Activated B cell treated with CpG ODN at 0.5 μM for 24 hours (primary cell): ENCODE measurements at regions of chr3 and their contacts with region 1.

Region 1: DNA sequence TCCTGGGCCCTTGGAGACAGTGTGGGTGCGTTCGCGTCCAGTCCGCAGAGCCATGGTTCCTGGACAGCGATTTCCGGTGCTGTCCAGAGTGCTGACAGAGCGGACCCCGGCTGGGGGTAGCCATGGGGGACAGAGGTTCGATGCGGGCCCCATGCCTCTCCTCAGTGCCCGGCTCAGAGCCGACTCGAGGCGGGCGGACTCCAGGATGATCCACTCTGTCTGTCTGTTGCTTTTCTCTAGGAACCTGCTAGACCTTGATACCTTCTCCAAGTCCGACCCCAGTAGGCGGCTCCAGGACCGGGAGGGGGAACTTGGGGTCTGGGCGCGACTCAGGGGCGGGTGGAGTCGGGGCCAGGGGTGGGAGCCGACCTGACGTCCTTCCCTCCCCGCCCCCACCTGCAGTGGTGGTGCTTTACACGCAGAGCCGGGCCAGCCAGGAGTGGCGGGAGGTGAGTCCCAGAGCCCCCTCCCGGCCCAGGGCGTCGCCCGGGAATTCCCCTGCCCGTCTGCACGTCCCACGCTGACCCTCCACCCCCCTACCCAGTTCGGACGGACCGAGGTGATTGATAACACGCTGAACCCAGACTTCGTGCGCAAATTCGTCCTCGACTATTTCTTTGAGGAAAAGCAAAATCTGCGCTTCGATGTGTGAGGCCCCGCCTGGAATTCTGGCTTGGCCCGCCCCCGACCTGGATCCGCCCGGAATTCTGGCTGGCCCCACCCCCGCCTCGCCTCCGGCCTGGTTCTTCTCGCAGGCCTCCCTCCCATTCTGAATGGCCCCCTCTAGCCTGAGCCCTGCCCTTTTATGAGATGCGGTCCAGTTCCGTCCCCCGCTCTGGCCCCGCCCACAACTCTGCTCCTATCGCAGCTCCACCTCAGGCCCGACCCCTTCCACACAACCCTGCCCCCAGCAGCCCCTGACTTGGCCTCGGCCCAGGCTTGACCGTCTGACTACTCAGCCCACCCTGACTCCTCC is 1.0 kb downstream of the CPNE9 start:
- DNase-seq: no peak
- ATAC-seq: peak; percentile 47
- H3K4me3 Mint-ChIP-seq: peak overlapping the region; percentile 55
- H3K27ac Mint-ChIP-seq: no peak overlapping the region
- H3K4me1 Mint-ChIP-seq: peaks cover 19% of the 10 kb centered on the region
- H3K27me3 Mint-ChIP-seq: peaks cover 15% of the 10 kb centered on the region
- CTCF ChIP-seq: no peak

Region 2: GRCh38 chr3:9552252-9552999 is 152.2 kb before region 1 on chr3:
- CTCF ChIA-PET with region 1: no interaction called
- POLR2A ChIA-PET with region 1: no interaction called
- intact Hi-C with region 1: no loop called
- DNase-seq: no peak
- ATAC-seq: no peak
- H3K4me3 Mint-ChIP-seq: no peak overlapping the region
- H3K27ac Mint-ChIP-seq: no peak overlapping the region
- H3K4me1 Mint-ChIP-seq: peaks cover 7% of the 10 kb centered on the region
- H3K27me3 Mint-ChIP-seq: peaks cover 45% of the 10 kb centered on the region
- CTCF ChIP-seq: no peak

Region 3: GRCh38 chr3:9690451-9691450 is 13.9 kb before region 1 on chr3:
- CTCF ChIA-PET with region 1: no interaction called
- POLR2A ChIA-PET with region 1: interaction called, 7 read pairs
- intact Hi-C with region 1: loop called (anchors 1 kb)
- DNase-seq: peak; percentile 60
- ATAC-seq: peak; percentile 99
- H3K4me3 Mint-ChIP-seq: no peak overlapping the region
- H3K27ac Mint-ChIP-seq: peak overlapping the region; percentile 12
- H3K4me1 Mint-ChIP-seq: peaks cover 24% of the 10 kb centered on the region
- H3K27me3 Mint-ChIP-seq: no peaks in the 10 kb centered on the region
- CTCF ChIP-seq: no peak

Region 4: GRCh38 chr3:9721015-9721699 is 16.5 kb after region 1 on chr3:
- CTCF ChIA-PET with region 1: no interaction called
- POLR2A ChIA-PET with region 1: no interaction called
- intact Hi-C with region 1: loop called (anchors 2 kb)
- DNase-seq: no peak
- ATAC-seq: no peak
- H3K4me3 Mint-ChIP-seq: no peak overlapping the region
- H3K27ac Mint-ChIP-seq: peak overlapping the region; percentile 44
- H3K4me1 Mint-ChIP-seq: peaks cover 15% of the 10 kb centered on the region
- H3K27me3 Mint-ChIP-seq: no peaks in the 10 kb centered on the region
- CTCF ChIP-seq: no peak

Region 5: DNA sequence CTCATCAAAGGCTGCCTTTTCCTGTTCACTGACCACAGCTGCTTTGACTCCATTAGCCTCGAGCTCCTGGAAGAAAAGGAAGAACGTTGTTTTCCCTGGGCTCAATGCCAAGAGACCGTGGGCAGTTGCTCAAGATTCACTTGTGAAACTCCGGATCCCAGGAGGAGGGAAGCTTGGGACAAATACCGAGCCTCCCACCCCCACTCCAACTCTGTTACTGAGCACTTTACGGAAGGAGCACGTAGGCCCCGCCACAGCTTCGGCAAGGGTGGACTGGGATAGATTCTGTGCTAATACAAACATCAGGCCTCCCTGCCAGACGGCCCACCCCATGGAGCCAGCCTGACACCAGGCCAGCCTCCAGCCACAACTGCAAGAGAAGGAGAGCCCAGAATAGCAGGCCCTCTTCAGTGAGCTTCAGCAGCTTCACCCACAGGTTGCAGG is 310.8 kb after region 1 on chr3:
- CTCF ChIA-PET with region 1: no interaction called
- POLR2A ChIA-PET with region 1: no interaction called
- intact Hi-C with region 1: no loop called
- DNase-seq: no peak
- ATAC-seq: no peak
- H3K4me3 Mint-ChIP-seq: no peak overlapping the region
- H3K27ac Mint-ChIP-seq: no peak overlapping the region
- H3K4me1 Mint-ChIP-seq: peaks cover 6% of the 10 kb centered on the region
- H3K27me3 Mint-ChIP-seq: no peaks in the 10 kb centered on the region
- CTCF ChIP-seq: no peak